Activated CD4-positive, alpha-beta T cell treated with anti-CD3 and anti-CD28 coated beads for 36 hours (primary cell): ENCODE measurements at regions of chrX and their contacts with region 1.

Region 1: GRCh38 chrX:129606918-129607317 is 47.8 kb downstream of the APLN start:
- DNase-seq: peak; percentile 59
- ATAC-seq: no peak
- H3K4me3 Mint-ChIP-seq: no peak overlapping the region
- H3K27ac Mint-ChIP-seq: peak overlapping the region; percentile 48
- H3K4me1 Mint-ChIP-seq: peaks cover 11% of the 10 kb centered on the region
- H3K27me3 Mint-ChIP-seq: no peaks in the 10 kb centered on the region

Region 2: GRCh38 chrX:129726307-129727111 is 119.6 kb after region 1 on chrX:
- CTCF ChIA-PET with region 1: interaction called, 5 read pairs
- POLR2A ChIA-PET with region 1: no interaction called
- intact Hi-C with region 1: loop called (anchors 1 to 10 kb)
- DNase-seq: peak; percentile 59
- ATAC-seq: peak; percentile 53
- H3K4me3 Mint-ChIP-seq: no peak overlapping the region
- H3K27ac Mint-ChIP-seq: peak overlapping the region; percentile 62
- H3K4me1 Mint-ChIP-seq: peaks cover 33% of the 10 kb centered on the region
- H3K27me3 Mint-ChIP-seq: no peaks in the 10 kb centered on the region

Region 3: DNA sequence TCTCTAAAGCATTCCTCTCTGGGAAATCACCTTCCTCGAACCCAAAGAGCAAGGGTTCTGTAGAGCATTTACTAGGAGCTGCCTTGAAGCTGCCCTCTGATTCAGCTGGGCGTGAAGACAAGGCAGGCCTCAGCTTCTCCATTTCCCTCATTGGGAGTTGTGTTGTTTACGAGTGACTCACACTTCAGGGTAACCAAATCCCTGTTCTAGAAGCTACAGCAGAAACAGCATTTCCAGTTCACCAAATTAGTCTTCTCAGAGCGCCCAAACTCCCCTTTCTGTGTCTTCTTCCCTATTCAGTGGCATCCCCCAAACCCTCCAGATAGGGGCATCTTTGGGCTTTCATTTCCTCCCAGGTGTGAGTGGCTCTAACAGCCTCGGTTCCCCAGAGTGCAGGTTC is 131.0 kb after region 1 on chrX:
- CTCF ChIA-PET with region 1: no interaction called
- POLR2A ChIA-PET with region 1: no interaction called
- intact Hi-C with region 1: loop called in 1 of 2 experiments (anchors 10 kb)
- DNase-seq: peak; percentile 12
- ATAC-seq: peak; percentile 48
- H3K4me3 Mint-ChIP-seq: no peak overlapping the region
- H3K27ac Mint-ChIP-seq: peak overlapping the region; percentile 8
- H3K4me1 Mint-ChIP-seq: peaks cover 24% of the 10 kb centered on the region
- H3K27me3 Mint-ChIP-seq: no peaks in the 10 kb centered on the region

Region 4: GRCh38 chrX:129823115-129823514 is 216.2 kb after region 1 on chrX:
- CTCF ChIA-PET with region 1: interaction called, 5 read pairs
- POLR2A ChIA-PET with region 1: interaction called, 3 read pairs
- intact Hi-C with region 1: loop called in 1 of 2 experiments (anchors 5 kb)
- DNase-seq: peak; percentile 65
- ATAC-seq: peak; percentile 87
- H3K4me3 Mint-ChIP-seq: no peak overlapping the region
- H3K27ac Mint-ChIP-seq: peak overlapping the region; percentile 81
- H3K4me1 Mint-ChIP-seq: peaks cover 16% of the 10 kb centered on the region
- H3K27me3 Mint-ChIP-seq: no peaks in the 10 kb centered on the region

Region 5: GRCh38 chrX:130024127-130024526 is 417.2 kb after region 1 on chrX:
- CTCF ChIA-PET with region 1: interaction called, 4 read pairs
- POLR2A ChIA-PET with region 1: no interaction called
- intact Hi-C with region 1: loop called in 1 of 2 experiments (anchors 2 kb)
- DNase-seq: peak; percentile 83
- ATAC-seq: peak; percentile 100
- H3K4me3 Mint-ChIP-seq: no peak overlapping the region
- H3K27ac Mint-ChIP-seq: peak overlapping the region; percentile 61
- H3K4me1 Mint-ChIP-seq: peaks cover 8% of the 10 kb centered on the region
- H3K27me3 Mint-ChIP-seq: no peaks in the 10 kb centered on the region

Region 6: GRCh38 chrX:130060122-130061069 is 453.5 kb after region 1 on chrX:
- CTCF ChIA-PET with region 1: interaction called, 11 read pairs
- POLR2A ChIA-PET with region 1: no interaction called
- intact Hi-C with region 1: loop called (anchors 1 kb)
- DNase-seq: peak; percentile 90
- ATAC-seq: peak; percentile 91
- H3K4me3 Mint-ChIP-seq: peak overlapping the region; percentile 65
- H3K27ac Mint-ChIP-seq: peak overlapping the region; percentile 55
- H3K4me1 Mint-ChIP-seq: peaks cover 4% of the 10 kb centered on the region
- H3K27me3 Mint-ChIP-seq: no peaks in the 10 kb centered on the region

Region 7: GRCh38 chrX:130196466-130196865 is 589.5 kb after region 1 on chrX:
- CTCF ChIA-PET with region 1: no interaction called
- POLR2A ChIA-PET with region 1: no interaction called
- intact Hi-C with region 1: loop called (anchors 5 to 10 kb)
- DNase-seq: no peak
- ATAC-seq: no peak
- H3K4me3 Mint-ChIP-seq: no peak overlapping the region
- H3K27ac Mint-ChIP-seq: no peak overlapping the region
- H3K4me1 Mint-ChIP-seq: no peaks in the 10 kb centered on the region
- H3K27me3 Mint-ChIP-seq: no peaks in the 10 kb centered on the region